H1 (cell line): ENCODE measurements at regions of chr18 and their contacts with region 1.

Region 1: DNA sequence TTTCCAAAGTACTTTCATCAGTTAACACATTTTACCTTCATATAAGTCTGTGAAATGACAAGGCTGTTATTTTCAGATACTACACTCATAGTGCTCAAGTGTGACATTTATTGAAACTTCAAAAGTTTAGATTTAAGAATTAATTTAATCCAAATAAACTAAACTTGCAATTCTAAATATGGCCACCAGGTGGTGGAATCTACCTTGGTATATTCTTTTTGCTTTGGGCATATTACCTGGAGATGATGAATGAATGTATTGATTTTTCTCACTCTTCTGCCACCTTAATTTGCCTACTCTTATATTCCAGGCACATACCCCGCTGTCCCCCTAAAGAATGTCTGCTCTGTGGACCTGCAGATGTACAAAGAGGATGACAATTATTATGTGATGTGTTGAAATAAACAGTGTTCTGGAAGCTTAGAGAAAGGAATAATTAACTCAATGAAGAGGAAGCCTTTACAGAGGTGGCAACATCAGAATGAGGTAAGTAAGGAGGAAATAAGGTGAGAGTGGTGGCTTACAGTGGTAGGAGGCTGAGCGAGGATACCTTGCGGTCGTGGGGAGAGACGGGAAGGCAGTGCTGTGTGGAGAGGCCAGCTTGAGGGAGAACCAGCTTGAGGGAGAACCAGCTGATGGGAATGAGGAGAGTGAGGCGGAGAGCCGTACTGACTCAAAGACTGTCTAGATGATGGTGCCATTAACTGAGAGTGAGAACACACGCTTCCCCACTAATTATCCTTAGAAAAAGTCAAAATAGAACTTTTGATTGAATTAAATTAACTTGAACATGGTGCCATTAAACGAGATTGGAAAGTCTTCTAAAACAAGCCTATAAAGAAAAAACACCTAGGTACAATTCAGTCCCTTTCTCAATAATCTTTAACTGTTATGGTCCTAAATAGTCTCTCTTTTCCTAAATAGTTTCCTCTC is 179.5 kb downstream of the CELF4 start:
- DNase-seq: no peak
- H3K4me3 ChIP-seq: no peak overlapping the region
- H3K27ac ChIP-seq: no peak overlapping the region
- H3K4me1 ChIP-seq: peaks cover 0 to 11% (median 8%) of the 10 kb centered on the region in 4 experiments; a peak in 6 of 7 replicates
- H3K27me3 ChIP-seq: no peaks in the 10 kb centered on the region; a peak in 1 of 7 replicates
- CTCF ChIP-seq: peak in 2 of 3 experiments; percentile 33 to 43; a peak in 2 of 4 replicates
- EP300 ChIP-seq: no peak
- POLR2A ChIP-seq: no peak
- RAD21 ChIP-seq: peak; percentile 69 to 77

Region 2: DNA sequence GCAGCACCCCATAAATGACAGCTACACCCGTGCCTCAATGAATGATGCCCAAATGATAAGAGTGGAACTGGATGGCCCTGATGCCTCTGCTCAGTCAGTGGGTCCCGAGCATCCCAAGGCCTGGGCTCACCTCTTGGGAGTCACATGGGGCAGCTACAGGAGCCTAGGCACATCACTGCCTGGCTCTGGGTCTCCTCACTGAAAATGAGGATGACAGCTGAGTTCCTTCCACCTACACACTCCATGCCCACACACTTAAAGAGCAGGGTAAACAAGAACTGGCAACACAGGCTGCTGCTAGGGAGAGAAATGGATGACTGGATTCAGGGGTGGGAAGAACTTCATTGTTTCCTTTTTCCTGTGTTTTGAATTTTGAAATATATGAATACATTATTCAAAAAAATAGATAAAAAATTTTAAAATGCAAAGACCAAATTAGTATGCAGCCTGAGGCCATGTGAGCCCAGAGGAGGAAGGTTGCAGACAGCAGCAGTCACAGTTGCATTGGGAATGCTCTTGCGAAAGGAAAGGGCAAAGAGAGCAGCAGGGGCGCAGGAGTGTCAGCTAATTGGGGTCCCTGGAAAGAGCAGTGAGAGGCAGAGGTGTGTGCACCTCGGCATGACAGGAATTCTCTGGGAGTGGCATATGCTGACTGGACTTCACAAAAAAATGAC is 147.7 kb before region 1 on chr18:
- CTCF ChIA-PET with region 1: no interaction called
- POLR2A ChIA-PET with region 1: no interaction called
- DNase-seq: no peak
- H3K4me3 ChIP-seq: no peak overlapping the region
- H3K27ac ChIP-seq: no peak overlapping the region
- H3K4me1 ChIP-seq: no peaks in the 10 kb centered on the region
- H3K27me3 ChIP-seq: no peaks in the 10 kb centered on the region; a peak in 2 of 7 replicates
- CTCF ChIP-seq: no peak
- EP300 ChIP-seq: no peak
- POLR2A ChIP-seq: no peak
- RAD21 ChIP-seq: no peak

Region 3: GRCh38 chr18:37346048-37346447 is 40.1 kb before region 1 on chr18:
- CTCF ChIA-PET with region 1: interaction called, 85 read pairs
- POLR2A ChIA-PET with region 1: no interaction called
- DNase-seq: no peak
- H3K4me3 ChIP-seq: no peak overlapping the region
- H3K27ac ChIP-seq: no peak overlapping the region
- H3K4me1 ChIP-seq: peaks cover 0 to 5% (median 2%) of the 10 kb centered on the region in 4 experiments; a peak in 6 of 7 replicates
- H3K27me3 ChIP-seq: peaks cover 0 to 3% (median 0%) of the 10 kb centered on the region in 4 experiments; a peak in 1 of 7 replicates
- CTCF ChIP-seq: no peak
- EP300 ChIP-seq: no peak
- POLR2A ChIP-seq: no peak
- RAD21 ChIP-seq: no peak

Region 4: DNA sequence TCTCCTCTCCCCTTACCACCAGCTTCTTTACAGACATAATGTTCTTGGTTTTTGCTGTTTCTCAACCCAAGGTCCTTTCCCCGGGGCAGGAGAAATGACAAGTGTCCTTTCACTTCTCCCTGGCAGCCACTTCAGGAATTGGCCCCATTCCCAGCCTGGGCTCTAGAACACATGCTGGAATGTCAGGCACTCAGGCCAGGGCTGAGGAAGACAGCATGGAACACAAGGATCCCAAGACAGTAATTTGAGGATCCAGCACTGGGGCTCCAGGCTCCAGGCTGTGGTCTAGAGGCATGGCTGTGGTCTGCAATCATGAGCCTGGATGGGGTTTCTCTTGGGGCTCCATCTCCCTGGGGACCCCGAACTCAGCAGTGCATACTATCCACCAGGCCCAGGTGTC is 21.9 kb before region 1 on chr18:
- CTCF ChIA-PET with region 1: interaction called, 10 read pairs
- POLR2A ChIA-PET with region 1: no interaction called
- DNase-seq: no peak
- H3K4me3 ChIP-seq: no peak overlapping the region
- H3K27ac ChIP-seq: no peak overlapping the region
- H3K4me1 ChIP-seq: peaks cover 7 to 33% (median 24%) of the 10 kb centered on the region in 4 experiments
- H3K27me3 ChIP-seq: peaks cover 21 to 66% (median 59%) of the 10 kb centered on the region in 4 experiments
- CTCF ChIP-seq: no peak
- EP300 ChIP-seq: no peak
- POLR2A ChIP-seq: no peak
- RAD21 ChIP-seq: no peak

Region 5: DNA sequence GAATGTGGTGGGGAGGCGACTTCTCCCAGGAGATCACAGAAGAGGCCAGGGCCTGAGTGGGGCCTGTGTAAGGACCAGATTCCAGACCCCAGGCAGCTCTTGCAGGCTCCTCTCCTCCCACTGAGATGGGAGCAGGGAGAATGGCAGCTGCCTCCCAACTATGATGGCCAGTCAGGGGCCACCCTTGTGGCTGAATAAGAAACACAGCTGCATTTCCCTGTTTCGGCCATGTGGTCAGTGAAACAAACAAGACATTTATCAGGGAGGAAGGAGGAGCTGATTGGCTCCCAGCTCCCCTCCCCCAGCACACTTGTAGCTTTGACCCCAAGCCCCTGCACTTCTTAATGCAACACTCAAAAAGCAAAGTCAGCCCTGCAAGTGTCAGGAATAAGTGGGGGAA is 36.0 kb after region 1 on chr18:
- CTCF ChIA-PET with region 1: interaction called, 11 read pairs
- POLR2A ChIA-PET with region 1: interaction called, 3 read pairs
- DNase-seq: no peak
- H3K4me3 ChIP-seq: no peak overlapping the region
- H3K27ac ChIP-seq: no peak overlapping the region
- H3K4me1 ChIP-seq: peaks cover 0 to 15% (median 6%) of the 10 kb centered on the region in 4 experiments; a peak in 3 of 7 replicates
- H3K27me3 ChIP-seq: no peaks in the 10 kb centered on the region; a peak in 3 of 7 replicates
- CTCF ChIP-seq: no peak
- EP300 ChIP-seq: no peak
- POLR2A ChIP-seq: no peak
- RAD21 ChIP-seq: no peak

Region 6: DNA sequence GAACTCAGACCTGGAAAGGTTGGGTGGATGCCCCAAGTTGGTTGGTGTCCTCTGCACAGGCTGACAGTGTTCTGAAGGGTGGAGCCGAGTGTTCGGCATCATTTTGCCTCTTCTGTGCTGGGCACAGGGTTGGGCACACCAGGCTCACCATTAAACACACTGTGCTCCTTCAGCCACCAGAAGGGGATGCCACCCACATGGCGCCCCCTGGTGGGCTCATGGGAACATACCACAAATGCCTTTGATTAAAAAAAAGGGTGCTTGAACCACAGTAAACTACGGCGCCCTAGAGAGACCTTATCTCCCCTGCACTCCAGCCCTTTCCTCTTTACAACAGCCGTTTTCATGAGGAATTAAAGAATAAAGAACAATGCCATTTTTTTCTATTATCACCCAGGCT is 90.1 kb after region 1 on chr18:
- CTCF ChIA-PET with region 1: interaction called, 43 read pairs
- POLR2A ChIA-PET with region 1: no interaction called
- DNase-seq: peak in 1 of 2 experiments; percentile 79
- H3K4me3 ChIP-seq: no peak overlapping the region
- H3K27ac ChIP-seq: no peak overlapping the region
- H3K4me1 ChIP-seq: peaks cover 0 to 6% (median 0%) of the 10 kb centered on the region in 4 experiments; a peak in 2 of 7 replicates
- H3K27me3 ChIP-seq: no peaks in the 10 kb centered on the region
- CTCF ChIP-seq: peak; percentile 69 to 94 (median 75)
- EP300 ChIP-seq: no peak
- POLR2A ChIP-seq: no peak
- RAD21 ChIP-seq: peak; percentile 71 to 79

Region 7: DNA sequence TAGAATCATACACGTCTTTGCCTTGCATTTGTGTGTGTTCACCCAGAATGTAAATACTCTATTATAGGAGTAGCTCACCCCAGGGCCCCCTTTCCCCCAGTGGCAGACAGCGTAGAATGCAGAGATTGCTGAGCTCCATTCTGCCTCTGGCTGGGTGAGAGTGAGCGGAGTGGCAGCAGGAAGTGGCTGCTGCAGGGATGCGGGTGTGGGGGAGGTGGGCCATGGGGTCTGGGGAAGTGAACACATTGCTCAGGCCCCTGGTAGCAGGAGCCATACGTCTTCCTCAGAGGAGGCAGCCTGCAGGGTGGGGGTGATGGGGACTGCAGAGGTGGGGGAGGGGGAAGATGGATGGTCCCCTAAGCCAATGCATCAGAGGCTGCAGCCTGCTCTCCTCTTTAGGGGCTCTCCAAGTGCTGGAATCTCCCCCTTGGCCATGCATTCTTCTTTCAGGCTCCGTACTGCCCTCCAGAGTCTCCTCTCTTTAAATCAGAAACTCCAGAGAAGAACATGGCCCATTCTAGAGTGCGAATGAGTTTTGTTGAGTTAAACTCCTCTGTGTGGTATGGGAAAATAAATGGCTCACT is 107.3 kb after region 1 on chr18:
- CTCF ChIA-PET with region 1: interaction called, 14 read pairs
- POLR2A ChIA-PET with region 1: no interaction called
- DNase-seq: no peak
- H3K4me3 ChIP-seq: no peak overlapping the region
- H3K27ac ChIP-seq: no peak overlapping the region
- H3K4me1 ChIP-seq: peaks cover 0 to 29% (median 11%) of the 10 kb centered on the region in 4 experiments; a peak in 6 of 7 replicates
- H3K27me3 ChIP-seq: peaks cover 0 to 3% (median 0%) of the 10 kb centered on the region in 4 experiments; a peak in 4 of 7 replicates
- CTCF ChIP-seq: peak in 1 of 3 experiments; percentile 19; a peak in 1 of 4 replicates
- EP300 ChIP-seq: no peak
- POLR2A ChIP-seq: no peak
- RAD21 ChIP-seq: peak; percentile 11 to 31; a peak in 1 of 4 replicates

Region 8: DNA sequence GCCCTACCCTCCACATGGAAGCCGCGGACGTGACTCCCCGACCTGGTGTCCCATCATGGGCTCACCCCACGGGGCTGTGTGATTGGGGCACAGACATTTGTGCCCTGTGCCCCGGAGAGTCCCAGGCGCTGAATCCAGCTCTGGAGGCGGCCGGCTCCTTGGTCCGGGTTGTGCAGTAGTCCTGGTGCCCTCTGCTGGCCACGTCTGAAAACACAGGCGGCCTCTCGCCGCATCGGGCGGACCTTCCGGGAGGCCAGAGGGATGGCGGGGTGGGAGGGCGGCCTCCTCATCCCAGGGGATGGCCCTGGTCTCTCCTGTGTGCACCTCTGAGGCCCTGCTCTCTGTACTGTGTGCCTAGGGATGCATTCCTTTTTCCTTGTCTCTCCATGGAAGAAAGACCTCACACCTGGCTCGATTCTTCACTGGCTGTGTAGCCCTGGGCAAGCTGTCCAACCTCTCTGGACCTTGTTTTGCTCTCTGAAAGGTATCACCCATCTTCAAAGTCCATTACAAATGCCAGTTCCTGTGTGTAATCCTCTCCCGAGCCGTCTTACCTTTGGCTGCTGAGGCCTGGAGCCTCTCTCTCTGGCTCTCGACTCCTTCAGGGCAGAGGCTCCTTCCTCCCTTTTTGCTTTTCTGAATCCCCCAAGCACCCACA is 151.9 kb after region 1 on chr18:
- CTCF ChIA-PET with region 1: interaction called, 19 read pairs
- POLR2A ChIA-PET with region 1: no interaction called
- DNase-seq: peak in 1 of 2 experiments; percentile 95
- H3K4me3 ChIP-seq: peak overlapping the region in 2 of 4 experiments; percentile 34 to 52; a peak in 3 of 8 replicates
- H3K27ac ChIP-seq: 0 out of 2 replicates have a peak overlapping the region, but pooled peaks have one; percentile 48
- H3K4me1 ChIP-seq: peaks cover 13 to 17% (median 15%) of the 10 kb centered on the region in 4 experiments
- H3K27me3 ChIP-seq: peaks cover 0 to 5% (median 4%) of the 10 kb centered on the region in 4 experiments; a peak in 4 of 7 replicates
- CTCF ChIP-seq: peak; percentile 84 to 90 (median 85)
- EP300 ChIP-seq: no peak
- POLR2A ChIP-seq: 0 out of 3 replicates have a peak, but pooled peaks of 1 of the 2 experiments have one; percentile 2
- RAD21 ChIP-seq: peak; percentile 81 to 89